Activated T-helper 1 cell treated with anti-CD3 and anti-CD28 coated beads, Interleukin-12 subunit alpha, Interleukin-12 subunit beta, Interleukin-2, Interleukin-4 antibody, amounts not matched to agents 30 ng/mL and 10 ng/mL and 1 ng/mL, durations not matched to agents 14 hours and 24 hours and 36 hours (primary cell): ENCODE measurements at regions of chr19 and their contacts with region 1.

Region 1: GRCh38 chr19:57914531-57914930 is 1.9 kb downstream of the ZNF417 start:
- DNase-seq: no peak
- H3K4me3 Mint-ChIP-seq: peak overlapping the region; percentile 91
- H3K27ac Mint-ChIP-seq: no peak overlapping the region
- H3K4me1 Mint-ChIP-seq: peaks cover 15% of the 10 kb centered on the region
- H3K27me3 Mint-ChIP-seq: no peaks in the 10 kb centered on the region

Region 2: GRCh38 chr19:57746580-57747471 is 167.7 kb before region 1 on chr19 and contains the start of gene ZNF776:
- intact Hi-C with region 1: loop called (anchors 1 kb)
- DNase-seq: peak; percentile 79
- H3K4me3 Mint-ChIP-seq: peak within 1 kb of the TSS; percentile 90
- H3K27ac Mint-ChIP-seq: peak within 1 kb of the TSS; percentile 93
- H3K4me1 Mint-ChIP-seq: peaks cover 12% of the 10 kb centered on the region
- H3K27me3 Mint-ChIP-seq: peaks cover 2% of the 10 kb centered on the region
- total RNA-seq, gene ZNF776: 6.8 and 6.9 TPM in 2 replicates

Region 3: DNA sequence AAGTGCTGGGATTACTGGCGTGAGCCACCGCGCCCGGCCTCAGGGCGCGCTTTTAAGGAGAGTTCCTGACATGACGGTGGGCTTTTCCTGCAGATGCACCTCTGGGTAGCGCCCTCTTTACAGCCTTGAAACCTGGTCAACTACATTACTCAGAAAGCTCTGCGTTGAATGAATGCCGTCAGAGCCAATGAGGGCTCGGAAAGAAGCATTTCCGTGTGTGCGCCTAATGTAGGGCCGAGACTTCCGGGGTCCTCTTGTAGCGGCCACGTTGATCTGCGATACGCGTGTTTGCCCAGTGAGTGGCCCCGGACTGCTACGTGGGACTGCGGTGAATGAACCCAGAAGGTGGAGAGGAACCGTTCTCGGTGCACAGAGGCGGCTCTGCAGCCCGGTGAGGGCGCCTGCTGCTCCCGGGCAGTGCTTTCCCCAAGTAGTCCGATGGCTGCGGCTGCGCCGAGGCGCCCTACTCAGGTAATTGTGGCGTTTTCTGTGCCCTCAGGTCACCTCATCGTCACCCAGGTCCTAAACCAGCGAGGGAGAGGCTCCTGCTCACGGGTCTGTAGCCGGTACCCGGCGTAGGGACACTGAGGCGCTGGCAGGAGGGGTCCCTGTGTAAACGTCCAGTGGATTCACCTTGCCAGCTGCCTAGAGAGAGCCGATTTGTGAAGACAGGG is 94.9 kb before region 1 on chr19:
- intact Hi-C with region 1: loop called (anchors 2 kb)
- DNase-seq: peak; percentile 76
- H3K4me3 Mint-ChIP-seq: peak overlapping the region; percentile 99
- H3K27ac Mint-ChIP-seq: peak overlapping the region; percentile 98
- H3K4me1 Mint-ChIP-seq: peaks cover 50% of the 10 kb centered on the region
- H3K27me3 Mint-ChIP-seq: no peaks in the 10 kb centered on the region

Region 4: DNA sequence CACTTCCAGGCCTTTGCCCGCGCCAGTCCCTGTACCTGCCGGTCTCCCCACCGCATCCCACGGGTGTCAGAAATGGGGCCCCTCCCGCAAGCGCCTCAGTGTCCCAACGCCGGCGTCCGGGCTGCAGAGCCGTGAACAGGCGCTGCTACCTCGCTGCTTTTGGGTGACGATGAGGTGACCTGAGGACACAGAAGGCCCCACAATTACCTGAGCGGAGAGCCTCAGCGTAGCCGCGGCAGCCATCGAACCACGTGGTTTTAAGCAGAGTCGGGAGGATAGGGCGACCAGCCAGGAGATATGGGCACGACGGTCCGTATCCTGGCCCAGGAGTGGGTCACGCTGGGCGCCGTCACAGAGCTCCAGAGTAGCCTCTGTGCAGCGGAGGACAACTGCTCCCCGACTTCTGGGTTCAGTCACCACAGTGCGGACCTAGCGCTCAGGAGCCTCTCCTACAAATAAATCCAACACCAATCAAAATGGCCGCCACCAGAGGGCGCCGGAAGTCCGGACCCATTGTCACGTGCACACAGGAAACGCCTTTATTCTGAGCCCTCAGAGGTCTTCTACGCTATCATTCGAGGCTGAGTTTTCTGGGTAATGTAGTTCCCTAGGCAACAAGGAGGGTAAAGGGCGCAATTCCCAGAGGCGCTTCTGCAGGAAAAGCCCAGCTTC is 25.8 kb before region 1 on chr19 and contains the start of gene ZNF814:
- intact Hi-C with region 1: loop called (anchors 1 kb)
- DNase-seq: peak; percentile 56
- H3K4me3 Mint-ChIP-seq: peak within 1 kb of the TSS; percentile 89
- H3K27ac Mint-ChIP-seq: peak within 1 kb of the TSS; percentile 75
- H3K4me1 Mint-ChIP-seq: peaks cover 10% of the 10 kb centered on the region
- H3K27me3 Mint-ChIP-seq: no peaks in the 10 kb centered on the region
- total RNA-seq, gene ZNF814: 14.1 and 15.7 TPM in 2 replicates

Region 5: GRCh38 chr19:58002384-58003173 is 88.0 kb after region 1 on chr19 and contains the start of gene ZNF606:
- intact Hi-C with region 1: loop called (anchors 1 kb)
- DNase-seq: peak; percentile 80
- H3K4me3 Mint-ChIP-seq: peak within 1 kb of the TSS; percentile 84
- H3K27ac Mint-ChIP-seq: peak within 1 kb of the TSS; percentile 67
- H3K4me1 Mint-ChIP-seq: peaks cover 20% of the 10 kb centered on the region
- H3K27me3 Mint-ChIP-seq: no peaks in the 10 kb centered on the region
- total RNA-seq, gene ZNF606: 6.3 and 6.4 TPM in 2 replicates